ENCODE measurements at regions of chr19 and their contacts with region 1.

Region 1: GRCh38 chr19:49182848-49183344 is 25.3 kb downstream of the TRPM4 start:
- H3K4me3 ChIP-seq: no peak overlapping the region
- H3K27ac ChIP-seq: no peak overlapping the region
- H3K4me1 ChIP-seq: no peaks in the 10 kb centered on the region
- CTCF ChIP-seq: no peak

Region 2: DNA sequence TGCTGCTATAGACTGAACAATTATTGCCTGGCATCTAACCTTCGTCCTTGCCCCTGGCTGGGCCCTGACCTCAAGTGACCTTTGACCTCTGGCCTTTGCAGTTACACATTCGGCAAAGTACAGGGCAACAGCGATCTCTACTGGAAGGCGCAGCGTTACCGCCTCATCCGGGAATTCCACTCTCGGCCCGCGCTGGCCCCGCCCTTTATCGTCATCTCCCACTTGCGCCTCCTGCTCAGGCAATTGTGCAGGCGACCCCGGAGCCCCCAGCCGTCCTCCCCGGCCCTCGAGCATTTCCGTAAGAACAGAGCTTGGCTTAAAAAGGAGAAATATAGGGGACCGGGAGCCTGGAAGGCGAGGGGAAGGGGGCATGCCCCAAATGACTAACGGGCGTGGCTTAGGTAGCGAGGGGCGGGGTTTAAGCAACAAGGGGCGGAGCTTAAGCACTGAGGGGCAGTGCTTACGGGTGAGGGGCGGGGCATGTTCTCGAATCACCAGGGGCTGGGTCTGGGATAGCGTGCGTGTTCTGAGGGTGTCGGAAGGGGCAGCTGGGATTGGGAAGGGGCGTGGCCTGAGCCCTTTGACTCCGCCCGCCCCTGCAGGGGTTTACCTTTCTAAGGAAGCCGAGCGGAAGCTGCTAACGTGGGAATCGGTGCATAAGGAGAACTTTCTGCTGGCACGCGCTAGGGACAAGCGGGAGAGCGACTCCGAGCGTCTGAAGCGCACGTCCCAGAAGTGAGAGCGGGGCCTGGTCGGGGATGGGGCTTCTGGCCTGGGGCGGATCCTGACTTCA is 27.4 kb after region 1 on chr19:
- CTCF ChIA-PET with region 1: interaction called, 7 read pairs
- POLR2A ChIA-PET with region 1: interaction called, 10 read pairs
- H3K4me3 ChIP-seq: no peak overlapping the region
- H3K27ac ChIP-seq: no peak overlapping the region
- H3K4me1 ChIP-seq: peaks cover 6% of the 10 kb centered on the region; the same call in 1 of the 2 replicates
- CTCF ChIP-seq: no peak

Region 3: DNA sequence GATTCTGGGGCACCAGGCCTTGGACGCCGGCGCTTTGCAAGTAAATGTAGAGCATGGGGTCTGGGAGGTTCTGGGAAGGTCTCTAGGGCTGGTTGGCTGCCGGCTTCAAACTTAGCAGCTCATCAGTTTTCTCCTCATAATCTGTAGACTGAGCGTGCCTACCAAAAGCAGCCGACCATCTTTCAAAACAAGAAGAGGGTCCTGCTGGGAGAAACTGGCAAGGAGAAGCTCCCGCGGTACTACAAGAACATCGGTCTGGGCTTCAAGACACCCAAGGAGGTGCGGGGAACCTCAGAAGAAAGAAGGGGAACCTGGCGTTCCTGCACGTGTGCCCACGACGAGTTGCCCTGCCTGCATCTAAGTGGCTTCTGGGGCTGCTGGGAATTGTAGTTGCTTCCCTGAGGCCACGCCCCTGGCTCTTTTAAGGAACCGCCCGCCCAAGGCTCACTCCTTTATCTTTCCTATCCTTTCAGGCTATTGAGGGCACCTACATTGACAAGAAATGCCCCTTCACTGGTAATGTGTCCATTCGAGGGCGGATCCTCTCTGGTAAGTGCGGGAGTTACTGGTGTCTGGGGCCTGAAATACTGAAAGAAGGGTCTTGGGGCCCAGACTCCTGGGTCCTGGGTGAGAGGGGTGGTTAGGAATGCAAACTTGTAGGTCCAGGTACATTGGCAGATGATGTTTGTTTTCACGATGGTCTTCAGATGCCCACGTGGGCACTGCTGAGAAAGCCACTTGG is 314.3 kb after region 1 on chr19:
- CTCF ChIA-PET with region 1: no interaction called
- POLR2A ChIA-PET with region 1: interaction called, 10 read pairs
- H3K4me3 ChIP-seq: peak overlapping the region; percentile 89
- H3K27ac ChIP-seq: peak overlapping the region; percentile 87
- H3K4me1 ChIP-seq: peaks cover 7% of the 10 kb centered on the region
- CTCF ChIP-seq: no peak

Measured in HEK293 (cell line).